ENCODE measurements at regions of chr5 and their contacts with region 1.

Region 1: DNA sequence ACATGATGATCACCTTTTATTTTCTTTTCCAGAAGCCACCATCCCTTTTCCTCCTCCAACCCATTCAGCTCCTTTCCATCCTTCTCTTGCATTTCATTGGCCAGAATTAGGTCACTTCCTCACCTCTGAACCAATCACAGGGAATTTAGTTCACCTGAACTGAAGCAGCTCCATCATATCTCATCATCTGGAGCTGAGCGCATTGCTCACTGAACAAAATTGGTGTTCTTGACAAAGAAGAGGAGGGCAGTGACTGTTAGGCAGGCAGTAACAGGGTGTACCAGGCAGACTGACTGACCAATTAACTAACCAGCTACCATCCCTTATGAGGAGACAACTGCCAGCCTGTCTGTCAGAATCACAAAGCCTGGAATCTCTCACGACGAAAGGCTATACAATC is 1.8 kb upstream of the ZNF354A start:
- DNase-seq: no peak
- H3K4me3 Mint-ChIP-seq: no peak overlapping the region
- H3K27ac Mint-ChIP-seq: no peak overlapping the region
- H3K4me1 Mint-ChIP-seq: no peaks in the 10 kb centered on the region
- H3K27me3 Mint-ChIP-seq: no peaks in the 10 kb centered on the region
- CTCF ChIP-seq: no peak

Region 2: GRCh38 chr5:178542455-178542854 is 189.8 kb before region 1 on chr5:
- CTCF ChIA-PET with region 1: no interaction called
- intact Hi-C with region 1: no loop called
- DNase-seq: no peak
- H3K4me3 Mint-ChIP-seq: no peak overlapping the region
- H3K27ac Mint-ChIP-seq: no peak overlapping the region
- H3K4me1 Mint-ChIP-seq: no peaks in the 10 kb centered on the region
- H3K27me3 Mint-ChIP-seq: no peaks in the 10 kb centered on the region
- CTCF ChIP-seq: no peak

Region 3: DNA sequence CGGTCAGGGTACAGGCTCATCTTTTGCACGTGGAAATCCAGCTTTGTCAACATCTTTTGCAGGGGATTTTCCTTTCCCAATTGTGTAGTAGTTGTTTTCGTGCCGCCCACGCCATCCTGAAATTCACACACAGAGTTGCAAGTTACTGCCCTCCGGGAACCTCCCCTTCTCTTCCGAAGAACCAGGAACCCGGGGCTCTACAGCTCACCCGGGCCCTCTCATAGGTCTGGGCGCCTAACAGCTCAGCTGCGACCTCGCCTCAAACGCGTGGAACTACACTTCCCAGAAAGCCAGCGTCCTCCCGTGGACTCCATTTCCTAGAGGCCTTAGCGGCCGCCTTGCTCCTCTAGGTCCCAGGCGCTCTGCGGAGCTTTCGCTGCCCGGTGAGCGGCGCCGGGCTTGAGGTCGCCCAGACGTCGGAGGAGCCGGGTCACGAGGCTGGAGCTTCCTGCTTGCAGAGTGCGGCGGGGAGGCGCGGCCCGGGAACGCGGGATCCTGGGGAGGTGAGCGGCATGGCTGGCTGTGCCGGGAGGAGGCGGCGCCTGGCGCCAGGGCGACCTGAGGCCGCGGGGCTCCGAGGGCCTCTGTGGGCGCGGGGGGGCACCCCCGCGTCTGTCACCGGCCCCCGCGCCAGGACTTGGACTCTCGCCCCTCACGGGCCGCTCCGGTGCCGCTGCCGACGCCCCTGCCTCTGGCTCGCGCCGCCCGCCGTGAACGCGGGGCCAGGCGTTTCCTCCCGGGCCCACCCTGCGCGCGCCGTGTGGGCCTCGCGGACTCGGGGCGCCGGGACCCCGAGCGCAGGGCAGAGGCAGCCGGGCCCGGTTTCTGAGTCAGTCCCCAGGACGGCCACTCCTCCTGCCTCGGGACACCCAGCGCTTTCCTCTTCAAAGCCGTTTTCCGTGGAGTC is 127.6 kb after region 1 on chr5 and contains the start of gene ZNF354B:
- CTCF ChIA-PET with region 1: interaction called, 11 read pairs
- intact Hi-C with region 1: loop called (anchors 1 kb)
- DNase-seq: peak; percentile 91
- H3K4me3 Mint-ChIP-seq: peak within 1 kb of the TSS; percentile 83
- H3K27ac Mint-ChIP-seq: peak within 1 kb of the TSS; percentile 70
- H3K4me1 Mint-ChIP-seq: no peaks in the 10 kb centered on the region
- H3K27me3 Mint-ChIP-seq: no peaks in the 10 kb centered on the region
- CTCF ChIP-seq: peak; percentile 13
- total RNA-seq, gene ZNF354B: 17.3 and 19.2 TPM in 2 replicates